ENCODE measurements at regions of chr9 and their contacts with region 1.

Region 1: GRCh38 chr9:130271473-130271872 is 5.9 kb downstream of the HMCN2 start:
- DNase-seq: no peak
- ATAC-seq: peak in 1 of 2 donors; percentile 29
- H3K4me3 ChIP-seq: no peak overlapping the region
- H3K27ac ChIP-seq: peak overlapping the region; percentile 64
- H3K4me1 ChIP-seq: no peaks in the 10 kb centered on the region
- H3K27me3 ChIP-seq: no peaks in the 10 kb centered on the region

Region 2: DNA sequence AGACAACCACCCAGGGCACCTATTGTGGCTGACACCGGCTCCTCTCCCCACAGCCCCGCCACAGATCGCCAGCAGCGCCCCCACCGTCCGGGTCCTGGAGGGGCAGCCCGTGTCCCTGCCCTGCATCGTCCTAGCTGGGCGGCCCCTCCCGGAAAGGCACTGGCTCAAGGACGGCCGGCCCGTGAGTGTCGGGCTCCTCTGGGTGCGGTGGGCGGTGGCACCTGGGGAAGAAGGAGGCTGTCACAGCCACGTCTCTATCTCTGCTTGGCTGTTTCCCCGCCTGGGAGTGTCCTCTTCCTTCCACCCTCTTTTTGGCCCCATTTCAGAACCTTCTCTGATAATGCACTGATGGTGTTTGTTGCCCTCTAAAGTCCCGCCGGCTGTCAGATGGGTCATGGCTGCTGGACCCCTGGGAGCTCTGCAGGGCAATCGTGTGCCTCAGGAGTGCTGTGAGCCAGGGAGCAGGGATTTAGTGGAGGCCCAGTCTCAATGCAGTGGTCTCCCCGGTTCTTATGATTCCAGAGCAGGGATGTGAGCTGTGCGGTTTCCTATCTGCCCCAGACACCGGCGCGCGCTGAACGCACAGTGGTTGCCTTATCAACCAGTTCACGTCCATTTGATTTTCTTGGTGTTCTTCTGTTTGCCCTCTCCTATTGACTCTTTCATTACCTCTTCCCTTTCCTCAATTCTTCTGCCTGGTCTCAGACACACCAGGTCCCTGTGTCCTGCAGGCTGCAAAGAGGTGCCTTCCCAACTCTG is 49.4 kb after region 1 on chr9:
- intact Hi-C with region 1: loop called in 1 of 4 experiments (anchors 5 kb)
- DNase-seq: peak; percentile 61 to 84 (median 76)
- ATAC-seq: peak; percentile 74 to 87
- H3K4me3 ChIP-seq: no peak overlapping the region
- H3K27ac ChIP-seq: no peak overlapping the region
- H3K4me1 ChIP-seq: no peaks in the 10 kb centered on the region
- H3K27me3 ChIP-seq: no peaks in the 10 kb centered on the region